ENCODE measurements at regions of chr11 and their contacts with region 1.

Region 1: GRCh38 chr11:10857709-10858438 is at the start of gene ZBED5:
- DNase-seq: peak; percentile 99
- H3K4me3 ChIP-seq: peak within 1 kb of the TSS; percentile 70 to 91 (median 89)
- H3K27ac ChIP-seq: peak within 1 kb of the TSS; percentile 80
- H3K4me1 ChIP-seq: peaks cover 4% of the 10 kb centered on the region
- H3K27me3 ChIP-seq: no peaks in the 10 kb centered on the region
- CTCF ChIP-seq: peak in 1 of 2 donors; percentile 33
- total RNA-seq, gene ZBED5: 27.8 to 29.4 TPM

Region 2: GRCh38 chr11:10808553-10809372 is 49.1 kb before region 1 on chr11 and contains the start of gene EIF4G2:
- CTCF ChIA-PET with region 1: no interaction called
- dilution Hi-C with region 1: no loop called
- in situ Hi-C with region 1: no loop called
- intact Hi-C with region 1: loop called (anchors 1 kb)
- DNase-seq: peak; percentile 99
- H3K4me3 ChIP-seq: peak within 1 kb of the TSS; percentile 64 to 89 (median 86)
- H3K27ac ChIP-seq: peak within 1 kb of the TSS; percentile 83
- H3K4me1 ChIP-seq: peaks cover 23% of the 10 kb centered on the region
- H3K27me3 ChIP-seq: no peaks in the 10 kb centered on the region
- CTCF ChIP-seq: no peak
- total RNA-seq, gene EIF4G2: 737 to 956 TPM

Region 3: GRCh38 chr11:10878408-10879214 is 20.7 kb after region 1 on chr11:
- CTCF ChIA-PET with region 1: no interaction called
- dilution Hi-C with region 1: no loop called
- in situ Hi-C with region 1: no loop called
- intact Hi-C with region 1: loop called (anchors 1 kb)
- DNase-seq: peak; percentile 52
- H3K4me3 ChIP-seq: no peak overlapping the region
- H3K27ac ChIP-seq: no peak overlapping the region
- H3K4me1 ChIP-seq: peaks cover 4% of the 10 kb centered on the region
- H3K27me3 ChIP-seq: no peaks in the 10 kb centered on the region
- CTCF ChIP-seq: peak; percentile 81 to 84

Region 4: GRCh38 chr11:10899121-10899830 is 41.4 kb after region 1 on chr11:
- CTCF ChIA-PET with region 1: no interaction called
- dilution Hi-C with region 1: no loop called
- in situ Hi-C with region 1: no loop called
- intact Hi-C with region 1: loop called (anchors 1 kb)
- DNase-seq: peak; percentile 99
- H3K4me3 ChIP-seq: peak overlapping the region in 2 of 3 experiments; percentile 1 to 19
- H3K27ac ChIP-seq: peak overlapping the region; percentile 96
- H3K4me1 ChIP-seq: peaks cover 38% of the 10 kb centered on the region
- H3K27me3 ChIP-seq: no peaks in the 10 kb centered on the region
- CTCF ChIP-seq: no peak

Region 5: DNA sequence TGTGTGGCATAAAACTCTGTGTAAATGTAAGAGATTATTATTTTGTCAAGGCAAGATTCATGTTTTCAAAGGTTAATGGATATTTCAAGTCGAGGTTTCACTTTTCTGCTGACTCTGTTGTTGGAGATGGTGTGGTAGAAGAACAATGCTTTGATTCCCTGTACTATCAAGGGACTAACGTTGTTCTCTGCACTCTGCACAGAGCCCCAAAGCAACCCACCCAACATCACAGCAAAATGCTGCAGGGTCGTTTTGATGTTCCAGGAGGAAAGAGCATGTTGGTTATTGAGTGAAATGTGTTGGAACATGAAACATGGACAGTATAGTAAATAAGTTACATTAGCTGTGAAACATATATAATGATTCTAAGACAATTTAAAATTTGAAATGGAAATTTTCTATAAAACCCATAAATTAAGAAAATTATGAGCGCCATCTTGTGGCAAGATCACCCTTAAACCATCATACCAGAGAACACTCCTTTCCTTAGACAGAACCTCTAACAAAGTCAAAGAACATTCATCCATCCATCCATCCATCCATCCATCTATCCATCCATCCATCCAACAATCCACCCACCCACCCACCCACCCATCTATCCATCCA is 164.4 kb after region 1 on chr11:
- CTCF ChIA-PET with region 1: no interaction called
- dilution Hi-C with region 1: no loop called
- in situ Hi-C with region 1: no loop called
- intact Hi-C with region 1: loop called (anchors 2 kb)
- DNase-seq: no peak
- H3K4me3 ChIP-seq: no peak overlapping the region
- H3K27ac ChIP-seq: no peak overlapping the region
- H3K4me1 ChIP-seq: peaks cover 12% of the 10 kb centered on the region
- H3K27me3 ChIP-seq: no peaks in the 10 kb centered on the region
- CTCF ChIP-seq: peak; percentile 39 to 46

Region 6: DNA sequence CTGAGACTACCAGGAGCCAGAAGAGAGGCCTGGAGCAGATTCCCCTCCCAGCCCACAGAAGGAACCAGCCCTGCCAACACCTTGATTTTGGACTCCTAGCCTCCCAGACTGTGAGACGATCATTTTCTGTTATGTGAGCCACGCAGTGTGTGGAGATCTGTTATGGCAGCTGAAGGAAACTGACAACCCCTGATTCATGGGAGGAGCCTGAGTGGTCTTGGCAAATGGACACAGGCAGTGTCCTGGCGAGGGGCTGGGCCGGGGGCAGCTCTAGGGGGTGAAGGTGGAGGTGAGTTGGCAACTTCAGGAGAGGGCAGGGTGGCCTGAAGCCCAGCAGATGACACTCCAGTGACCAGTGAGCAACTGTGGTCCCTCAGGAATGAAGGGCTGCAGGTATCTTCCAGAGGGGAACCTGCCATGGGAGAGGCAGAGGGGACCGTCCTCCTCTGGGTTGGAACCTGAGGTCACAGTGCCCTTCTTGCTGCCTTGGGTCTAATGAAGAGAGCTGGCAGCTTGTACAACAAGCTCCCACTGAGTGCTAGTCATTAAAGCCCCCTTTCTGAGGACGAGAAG is 412.4 kb after region 1 on chr11:
- CTCF ChIA-PET with region 1: no interaction called
- dilution Hi-C with region 1: no loop called
- in situ Hi-C with region 1: no loop called
- intact Hi-C with region 1: no loop called
- DNase-seq: no peak
- H3K4me3 ChIP-seq: no peak overlapping the region
- H3K27ac ChIP-seq: no peak overlapping the region
- H3K4me1 ChIP-seq: peaks cover 20% of the 10 kb centered on the region
- H3K27me3 ChIP-seq: no peaks in the 10 kb centered on the region
- CTCF ChIP-seq: no peak